PC-3 (cell line): ENCODE measurements at regions of chr7 and their contacts with region 1.

Region 1: DNA sequence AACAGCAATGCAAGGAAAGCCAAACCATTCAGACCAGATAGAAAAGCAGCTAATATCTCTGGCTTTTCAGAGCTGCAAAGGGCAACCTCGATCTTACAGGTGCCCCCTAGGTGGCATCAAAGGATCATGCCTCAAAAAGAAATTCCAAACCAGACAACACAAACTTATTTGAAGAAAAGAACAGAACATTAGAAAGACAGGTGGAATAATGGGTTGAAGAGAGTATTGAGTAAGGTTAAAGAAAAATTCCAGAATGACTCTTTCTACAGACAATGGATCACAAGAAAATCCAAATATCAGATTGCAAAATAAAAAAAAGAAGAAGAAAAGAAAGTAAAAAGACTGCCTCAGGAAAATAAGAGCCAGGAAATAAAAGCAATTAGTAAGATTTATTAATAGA is 213.7 kb downstream of the ELMO1 start:
- DNase-seq: peak; percentile 39
- ATAC-seq: no peak
- H3K4me3 ChIP-seq: no peak overlapping the region
- H3K27ac ChIP-seq: no peak overlapping the region
- H3K4me1 ChIP-seq: no peaks in the 10 kb centered on the region
- H3K27me3 ChIP-seq: peaks cover 35% of the 10 kb centered on the region
- CTCF ChIP-seq: peak; percentile 74

Region 2: DNA sequence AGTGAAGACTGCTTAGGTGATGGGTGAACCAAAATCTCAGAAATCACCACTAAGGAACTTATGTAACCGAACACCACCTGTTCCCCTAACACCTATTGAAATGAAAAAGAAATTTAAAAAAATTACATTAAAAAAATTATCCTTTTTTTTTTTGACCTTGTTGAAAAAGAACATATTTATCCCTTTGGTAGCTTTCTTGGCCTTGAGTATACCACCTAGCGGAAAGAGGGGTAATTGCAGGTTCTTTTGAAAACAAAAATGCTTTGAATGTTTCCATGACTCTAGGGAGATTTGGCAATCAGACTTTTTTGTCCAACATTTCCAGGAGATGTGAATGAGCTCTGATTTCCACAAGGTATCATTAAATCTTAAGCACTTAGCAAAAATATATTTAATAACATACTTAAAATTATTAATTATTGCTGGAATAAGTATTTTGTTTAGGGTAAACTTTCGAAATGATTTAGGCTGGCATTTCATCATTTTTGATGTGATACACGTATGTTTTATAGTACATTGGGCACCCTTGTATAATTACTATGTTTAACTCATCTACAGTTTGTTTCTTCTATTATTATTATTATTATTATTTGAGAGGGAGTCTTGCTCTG is 260.8 kb after region 1 on chr7:
- CTCF ChIA-PET with region 1: no interaction called
- POLR2A ChIA-PET with region 1: no interaction called
- intact Hi-C with region 1: loop called (anchors 5 kb)
- DNase-seq: peak; percentile 39
- ATAC-seq: no peak
- H3K4me3 ChIP-seq: no peak overlapping the region
- H3K27ac ChIP-seq: no peak overlapping the region
- H3K4me1 ChIP-seq: no peaks in the 10 kb centered on the region
- H3K27me3 ChIP-seq: no peaks in the 10 kb centered on the region
- CTCF ChIP-seq: peak; percentile 47

Region 3: DNA sequence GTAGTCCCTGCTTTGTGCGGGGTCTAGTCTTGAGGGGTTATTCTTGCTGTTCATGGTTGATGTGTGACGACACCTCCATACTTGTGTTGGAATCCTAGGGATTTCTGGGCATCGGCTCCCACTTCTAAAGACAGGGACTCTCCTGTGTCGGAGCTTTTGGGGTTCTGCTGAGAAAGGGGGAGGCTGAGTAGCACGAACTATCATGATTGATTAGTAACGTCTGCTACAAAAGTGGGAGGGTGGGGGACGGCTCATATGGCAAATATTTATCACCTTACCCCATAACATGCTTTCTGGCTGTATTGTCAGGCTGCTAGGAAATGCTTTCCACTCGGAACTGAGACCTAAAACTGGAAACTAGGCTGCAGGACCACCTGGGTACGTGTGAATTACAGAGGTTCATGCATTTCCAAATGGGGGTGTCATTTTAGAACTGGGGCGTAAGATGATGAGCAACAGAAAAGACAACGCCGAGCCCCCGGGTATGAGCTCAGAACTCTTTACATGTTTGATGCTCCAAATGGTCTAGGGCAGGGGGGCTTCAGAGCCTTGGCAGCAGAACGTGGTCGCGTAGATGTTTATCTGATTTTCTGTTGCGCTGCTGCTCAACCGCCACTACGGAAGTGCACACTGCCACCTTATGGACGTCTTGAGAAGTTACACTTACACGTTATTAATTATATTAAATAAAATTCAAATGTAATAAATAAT is 598.3 kb after region 1 on chr7:
- CTCF ChIA-PET with region 1: no interaction called
- POLR2A ChIA-PET with region 1: no interaction called
- intact Hi-C with region 1: loop called (anchors 1 kb)
- DNase-seq: peak; percentile 56
- ATAC-seq: peak; percentile 43; the same call in 1 of the 2 replicates
- H3K4me3 ChIP-seq: peak overlapping the region; percentile 67
- H3K27ac ChIP-seq: no peak overlapping the region
- H3K4me1 ChIP-seq: no peaks in the 10 kb centered on the region
- H3K27me3 ChIP-seq: no peaks in the 10 kb centered on the region
- CTCF ChIP-seq: peak; percentile 53

Region 4: DNA sequence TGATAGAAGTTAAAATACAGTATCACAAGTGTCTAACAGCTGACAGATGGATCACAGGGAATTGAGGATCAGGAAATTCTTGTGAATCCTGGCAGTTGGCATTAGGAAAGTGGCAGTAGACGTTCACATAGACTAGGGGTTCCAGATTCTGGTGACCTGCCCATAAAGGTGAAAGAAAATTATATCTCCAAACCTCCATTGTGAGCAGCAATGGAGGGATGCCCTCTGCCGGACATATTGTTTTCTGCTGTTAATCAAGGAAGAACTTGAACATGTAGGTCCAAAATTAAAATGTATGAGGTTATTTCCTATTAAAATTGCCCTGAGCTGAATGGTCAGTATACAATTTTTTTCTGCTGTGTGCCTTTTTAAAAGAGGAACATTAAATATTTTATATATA is 618.5 kb after region 1 on chr7:
- CTCF ChIA-PET with region 1: no interaction called
- POLR2A ChIA-PET with region 1: no interaction called
- intact Hi-C with region 1: loop called (anchors 1 kb)
- DNase-seq: peak; percentile 36
- ATAC-seq: no peak
- H3K4me3 ChIP-seq: no peak overlapping the region
- H3K27ac ChIP-seq: no peak overlapping the region
- H3K4me1 ChIP-seq: no peaks in the 10 kb centered on the region
- H3K27me3 ChIP-seq: peaks cover 10% of the 10 kb centered on the region; the same call in 1 of the 2 replicates
- CTCF ChIP-seq: peak; percentile 63